Activated naive CD4-positive, alpha-beta T cell treated with anti-CD3 and anti-CD28 coated beads for 36 hours (primary cell): ENCODE measurements at regions of chr18 and their contacts with region 1.

Region 1: DNA sequence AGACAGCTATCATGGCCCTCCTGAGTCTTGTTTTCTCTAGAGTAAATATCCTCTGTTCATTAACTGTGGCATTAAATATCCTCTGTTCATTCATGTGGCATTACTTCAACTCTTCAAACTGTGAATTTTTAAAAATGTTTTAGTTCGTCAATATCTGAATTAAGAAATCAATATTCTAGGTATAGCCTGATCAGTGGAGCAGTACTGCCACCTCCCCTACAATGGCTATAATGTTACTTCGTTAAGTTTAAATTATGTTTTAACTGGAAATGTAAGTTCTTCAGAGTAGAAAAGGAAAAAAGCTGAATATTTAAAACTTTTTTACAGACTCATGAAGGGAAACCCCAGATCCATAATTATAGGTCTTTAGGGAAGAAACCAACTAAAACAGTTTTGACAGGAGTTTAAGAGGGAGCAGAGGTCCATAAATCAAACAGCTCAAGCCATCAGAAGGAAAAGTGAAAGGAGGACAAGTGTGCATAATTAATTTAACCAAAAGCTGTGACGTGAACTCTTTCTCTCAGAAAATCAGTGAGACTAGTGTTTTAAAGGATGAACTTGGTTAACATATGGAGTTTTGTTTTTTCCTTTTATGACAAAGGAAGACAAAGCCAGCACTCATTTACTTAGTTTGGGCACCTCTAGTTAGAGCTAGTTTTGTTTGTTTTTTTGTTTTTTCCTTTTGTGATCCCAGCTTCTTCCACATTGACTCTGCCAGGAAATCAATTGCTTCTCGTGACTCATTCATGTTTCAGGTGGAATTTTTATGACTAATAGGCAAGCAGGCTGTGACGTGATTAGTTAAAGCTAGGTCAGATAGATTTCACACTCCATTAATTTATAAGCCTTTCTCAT is 44.9 kb downstream of the RBBP8 start:
- DNase-seq: peak; percentile 13
- H3K4me3 Mint-ChIP-seq: peak overlapping the region; percentile 29
- H3K27ac Mint-ChIP-seq: peak overlapping the region; percentile 83
- H3K4me1 Mint-ChIP-seq: peaks cover 20% of the 10 kb centered on the region
- H3K27me3 Mint-ChIP-seq: no peaks in the 10 kb centered on the region

Region 2: GRCh38 chr18:22831441-22831904 is 146.6 kb before region 1 on chr18:
- CTCF ChIA-PET with region 1: no interaction called
- intact Hi-C with region 1: loop called (anchors 1 kb)
- DNase-seq: peak; percentile 38
- H3K4me3 Mint-ChIP-seq: no peak overlapping the region
- H3K27ac Mint-ChIP-seq: peak overlapping the region; percentile 69
- H3K4me1 Mint-ChIP-seq: peaks cover 17% of the 10 kb centered on the region
- H3K27me3 Mint-ChIP-seq: peaks cover 21% of the 10 kb centered on the region